Breast epithelium (tissue), 4 donors: ENCODE measurements at regions of chr19 and their contacts with region 1.

Region 1: DNA sequence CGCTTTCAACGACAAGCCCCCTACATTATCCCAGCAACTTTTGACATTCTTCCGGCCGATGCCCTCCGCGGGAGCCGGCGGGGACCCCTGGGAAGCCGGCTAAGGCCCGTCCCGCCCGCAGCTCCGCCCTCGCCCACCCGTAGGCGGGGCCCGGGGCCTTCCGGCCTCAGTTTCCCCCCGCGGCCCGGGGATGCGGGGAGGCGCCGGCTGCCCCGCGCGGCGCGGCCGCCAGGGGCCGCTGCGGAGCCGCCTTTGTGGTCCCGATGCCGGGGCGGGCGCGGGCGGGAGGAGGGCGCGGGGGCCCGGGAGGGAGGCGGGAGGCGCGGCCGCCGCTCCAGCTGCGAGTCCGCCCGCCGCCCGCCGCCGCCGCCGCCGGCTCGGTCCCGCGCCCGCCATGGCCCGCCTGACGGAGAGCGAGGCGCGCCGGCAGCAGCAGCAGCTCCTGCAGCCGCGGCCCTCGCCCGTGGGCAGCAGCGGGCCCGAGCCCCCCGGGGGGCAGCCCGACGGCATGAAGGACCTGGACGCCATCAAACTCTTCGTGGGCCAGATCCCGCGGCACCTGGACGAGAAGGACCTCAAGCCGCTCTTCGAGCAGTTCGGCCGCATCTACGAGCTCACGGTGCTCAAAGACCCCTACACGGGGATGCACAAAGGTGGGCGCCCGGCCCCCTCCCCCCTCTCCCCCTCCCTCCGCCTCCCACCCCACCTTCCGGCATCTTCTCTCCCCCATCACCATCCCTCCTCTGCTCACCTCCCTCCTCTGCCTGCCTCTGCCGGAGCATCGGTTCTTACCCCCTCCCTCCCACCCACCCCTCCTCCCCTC is at the start of gene CELF5:
- DNase-seq: peak in 1 of 2 donors; percentile 20
- H3K4me3 ChIP-seq: peak within 1 kb of the TSS in 2 of 3 donors; percentile 41 to 65
- H3K27ac ChIP-seq: no peak within 1 kb of the TSS
- H3K4me1 ChIP-seq: no peaks in the 10 kb centered on the region
- H3K27me3 ChIP-seq: peaks cover 0 to 45% of the 10 kb centered on the region in 2 donors
- CTCF ChIP-seq: peak in 1 of 3 donors; percentile 59
- POLR2A ChIP-seq: no peak
- total RNA-seq, gene CELF5: 0.33 to 0.59 TPM in 2 of 3 donors, not detected in the other

Region 2: GRCh38 chr19:3269916-3270667 is 45.5 kb after region 1 on chr19:
- intact Hi-C with region 1: loop called (anchors 1 kb)
- DNase-seq: no peak
- H3K4me3 ChIP-seq: no peak overlapping the region
- H3K27ac ChIP-seq: no peak overlapping the region
- H3K4me1 ChIP-seq: no peaks in the 10 kb centered on the region
- H3K27me3 ChIP-seq: peaks cover 0 to 23% of the 10 kb centered on the region in 2 donors
- CTCF ChIP-seq: no peak
- POLR2A ChIP-seq: no peak

Region 3: DNA sequence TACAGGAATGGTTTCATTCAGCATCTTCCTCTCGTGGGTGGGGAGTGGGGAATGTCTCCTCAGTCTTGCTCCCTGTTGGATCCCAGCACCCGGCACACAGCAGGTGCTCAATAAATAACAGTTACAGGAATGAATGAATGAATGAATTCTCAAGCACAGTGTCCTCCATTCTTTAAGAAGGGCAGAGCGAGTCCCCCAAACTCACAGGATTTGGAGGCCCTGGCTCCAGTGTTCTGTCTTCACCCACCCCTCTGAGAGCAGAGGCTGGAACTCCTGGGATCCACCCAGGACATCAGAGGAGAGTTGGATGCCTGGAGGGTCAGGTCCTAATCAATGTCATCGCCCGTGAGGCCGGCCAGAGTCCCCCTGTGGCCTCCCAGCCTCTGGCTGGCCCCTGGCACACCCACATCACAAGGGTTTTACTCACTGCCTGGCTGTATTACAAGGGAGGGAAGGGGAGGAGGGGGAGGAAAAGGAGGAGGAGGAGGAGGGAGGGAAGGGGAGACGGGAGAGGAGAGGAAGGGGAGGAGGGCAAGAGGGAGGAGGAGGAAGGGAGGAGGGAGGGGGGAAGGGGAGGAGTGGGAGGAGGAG is 920.2 kb after region 1 on chr19:
- intact Hi-C with region 1: loop called (anchors 5 kb)
- DNase-seq: no peak
- H3K4me3 ChIP-seq: no peak overlapping the region
- H3K27ac ChIP-seq: no peak overlapping the region
- H3K4me1 ChIP-seq: no peaks in the 10 kb centered on the region
- H3K27me3 ChIP-seq: peaks cover 0 to 10% of the 10 kb centered on the region in 2 donors
- CTCF ChIP-seq: no peak
- POLR2A ChIP-seq: no peak